Psoas muscle (tissue), 8 donors: ENCODE measurements at regions of chr1 and their contacts with region 1.

Region 1: GRCh38 chr1:207963427-207964194 is 52.7 kb upstream of the CD34 start:
- DNase-seq: peak; percentile 92 to 95
- ATAC-seq: peak; percentile 81 to 88 (median 84)
- H3K4me3 ChIP-seq: peak overlapping the region; percentile 78
- H3K27ac ChIP-seq: peak overlapping the region; percentile 94
- H3K4me1 ChIP-seq: peaks cover 35% of the 10 kb centered on the region
- H3K27me3 ChIP-seq: no peaks in the 10 kb centered on the region
- CTCF ChIP-seq: peak; percentile 100

Region 2: GRCh38 chr1:207309775-207310273 is 653.8 kb before region 1 on chr1:
- intact Hi-C with region 1: no loop called
- DNase-seq: peak; percentile 24 to 59
- ATAC-seq: peak; percentile 90 to 96 (median 93)
- H3K4me3 ChIP-seq: peak overlapping the region; percentile 63
- H3K27ac ChIP-seq: peak overlapping the region; percentile 88
- H3K4me1 ChIP-seq: peaks cover 11% of the 10 kb centered on the region
- H3K27me3 ChIP-seq: no peaks in the 10 kb centered on the region
- CTCF ChIP-seq: no peak

Region 3: DNA sequence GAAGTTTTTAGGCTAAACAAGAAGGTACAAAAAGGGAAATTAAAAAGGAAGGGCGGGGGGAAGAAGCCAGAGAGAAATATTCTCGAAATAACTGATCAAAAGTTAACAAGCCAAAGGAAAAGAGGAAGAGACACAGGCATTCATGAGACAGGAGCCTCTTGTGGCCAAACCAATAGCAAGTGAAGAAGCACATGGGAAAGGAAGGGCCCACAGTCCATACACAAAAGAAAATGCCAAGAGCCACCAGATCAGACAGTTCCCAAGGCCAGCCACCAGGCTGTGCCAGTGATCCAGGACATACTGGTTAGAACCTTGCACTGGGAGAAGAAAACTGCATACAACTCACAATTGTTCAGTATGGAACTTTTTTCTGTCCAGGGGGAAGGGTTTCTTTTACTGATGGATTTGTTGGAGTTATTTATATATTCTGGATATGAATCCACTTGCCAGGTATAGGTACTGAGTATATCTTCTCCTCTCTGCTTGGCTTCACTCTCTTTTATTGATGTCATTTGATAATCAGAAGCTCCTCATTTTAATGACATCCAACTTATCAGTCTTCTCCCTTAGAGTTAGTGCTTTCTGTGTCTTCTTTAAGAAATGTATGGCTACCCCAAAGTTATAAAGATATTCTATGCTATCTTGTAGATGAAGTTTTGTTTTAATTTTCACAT is 135.0 kb before region 1 on chr1:
- intact Hi-C with region 1: loop called (anchors 2 kb)
- DNase-seq: peak; percentile 78 to 89
- ATAC-seq: peak; percentile 51 to 64 (median 56)
- H3K4me3 ChIP-seq: no peak overlapping the region
- H3K27ac ChIP-seq: peak overlapping the region; percentile 100
- H3K4me1 ChIP-seq: peaks cover 92% of the 10 kb centered on the region
- H3K27me3 ChIP-seq: no peaks in the 10 kb centered on the region
- CTCF ChIP-seq: peak; percentile 90

Region 4: DNA sequence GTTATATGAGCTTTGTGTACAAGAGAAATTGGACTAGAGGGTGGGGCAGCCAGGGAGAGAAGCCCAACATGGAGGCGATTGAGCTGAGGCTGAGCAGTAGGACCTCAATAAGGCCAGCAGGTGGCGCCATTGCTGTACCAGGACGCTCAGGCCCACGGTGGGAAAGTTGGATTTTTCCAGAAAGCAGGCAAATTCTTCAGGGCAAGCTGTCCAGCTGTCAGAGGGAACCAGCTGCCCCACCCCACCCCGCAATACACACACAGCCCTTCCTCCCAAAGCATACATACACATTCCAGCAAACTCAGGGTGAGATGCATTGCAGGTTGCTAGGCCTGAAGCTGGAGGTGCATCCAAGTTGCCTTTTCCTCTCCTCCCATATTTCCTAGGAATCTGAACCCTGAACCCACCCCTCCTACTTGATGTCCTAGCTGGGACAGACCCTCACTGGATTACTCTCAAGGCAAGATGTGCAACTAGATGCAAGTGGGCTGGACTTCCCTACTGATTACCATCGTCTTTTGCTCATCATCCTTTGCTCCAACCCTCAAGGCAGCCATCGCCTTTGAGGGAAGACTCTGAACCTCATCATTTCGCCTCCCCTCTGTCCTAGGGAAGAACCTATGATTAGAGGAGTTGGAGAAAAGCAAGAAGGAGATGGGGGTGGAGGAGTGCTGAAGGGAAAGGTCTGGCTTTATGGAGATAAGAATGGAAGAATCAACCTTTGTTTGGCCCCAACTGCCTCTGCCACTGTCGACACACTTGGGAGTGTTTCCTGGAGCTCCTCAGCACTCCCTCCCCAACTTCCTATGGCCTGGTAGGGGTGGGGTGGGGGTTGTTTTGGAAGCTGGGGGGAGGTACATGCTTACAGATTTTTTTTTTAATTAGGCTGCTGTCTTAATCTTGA is 78.2 kb before region 1 on chr1:
- intact Hi-C with region 1: loop called (anchors 2 kb)
- DNase-seq: peak; percentile 83 to 90
- ATAC-seq: peak; percentile 83 to 94 (median 90)
- H3K4me3 ChIP-seq: no peak overlapping the region
- H3K27ac ChIP-seq: peak overlapping the region; percentile 30
- H3K4me1 ChIP-seq: peaks cover 23% of the 10 kb centered on the region
- H3K27me3 ChIP-seq: no peaks in the 10 kb centered on the region
- CTCF ChIP-seq: peak; percentile 97

Region 5: GRCh38 chr1:207897188-207897587 is 66.4 kb before region 1 on chr1:
- intact Hi-C with region 1: loop called (anchors 1 to 2 kb)
- DNase-seq: no peak
- ATAC-seq: peak in 1 of 4 donors; percentile 69
- H3K4me3 ChIP-seq: no peak overlapping the region
- H3K27ac ChIP-seq: no peak overlapping the region
- H3K4me1 ChIP-seq: peaks cover 2% of the 10 kb centered on the region
- H3K27me3 ChIP-seq: no peaks in the 10 kb centered on the region
- CTCF ChIP-seq: peak; percentile 46